HepG2 (cell line): ENCODE measurements at regions of chr17 and their contacts with region 1.

Region 1: GRCh38 chr17:32755045-32755805 is 121.7 kb downstream of the MYO1D start:
- DNase-seq: peak; percentile 69
- ATAC-seq: peak; percentile 59
- H3K4me3 ChIP-seq: no peak overlapping the region
- H3K27ac ChIP-seq: no peak overlapping the region
- H3K4me1 ChIP-seq: no peaks in the 10 kb centered on the region
- H3K27me3 ChIP-seq: no peaks in the 10 kb centered on the region
- CTCF ChIP-seq: peak; percentile 64
- EP300 ChIP-seq: no peak
- POLR2A ChIP-seq: no peak
- RAD21 ChIP-seq: peak; percentile 38; the same call in 1 of the 2 replicates

Region 2: DNA sequence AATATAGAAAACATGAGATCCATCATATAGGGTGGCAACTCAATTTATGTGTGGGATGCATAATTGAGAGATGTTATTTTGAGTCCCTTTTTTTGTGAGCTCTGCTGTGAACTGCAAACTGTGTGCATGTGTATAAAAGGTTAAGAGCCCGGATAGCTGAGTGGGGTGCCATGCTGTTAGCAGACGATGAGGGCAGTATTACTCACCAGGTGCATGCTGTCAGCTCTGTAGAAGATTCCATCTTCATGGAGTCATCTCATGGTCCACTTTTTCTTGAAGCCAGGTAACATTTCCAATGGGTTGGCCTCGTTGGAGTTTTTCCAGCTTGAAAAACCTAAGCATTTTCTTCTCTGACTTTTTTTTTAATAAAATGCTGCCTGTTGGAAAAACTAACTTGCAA is 532.6 kb before region 1 on chr17:
- CTCF ChIA-PET with region 1: no interaction called
- POLR2A ChIA-PET with region 1: no interaction called
- in situ Hi-C with region 1: no loop called
- intact Hi-C with region 1: no loop called
- DNase-seq: no peak
- ATAC-seq: no peak
- H3K4me3 ChIP-seq: no peak overlapping the region
- H3K27ac ChIP-seq: no peak overlapping the region
- H3K4me1 ChIP-seq: no peaks in the 10 kb centered on the region
- H3K27me3 ChIP-seq: no peaks in the 10 kb centered on the region
- CTCF ChIP-seq: no peak
- EP300 ChIP-seq: no peak
- POLR2A ChIP-seq: no peak
- RAD21 ChIP-seq: no peak

Region 3: GRCh38 chr17:32486111-32486700 is 269.0 kb before region 1 on chr17:
- CTCF ChIA-PET with region 1: no interaction called
- POLR2A ChIA-PET with region 1: no interaction called
- in situ Hi-C with region 1: loop called (anchors 10 kb)
- intact Hi-C with region 1: loop called (anchors 5 kb)
- DNase-seq: peak; percentile 49
- ATAC-seq: peak; percentile 78
- H3K4me3 ChIP-seq: peak overlapping the region; percentile 47 to 67 (median 64); a peak in 5 of 6 replicates
- H3K27ac ChIP-seq: peak overlapping the region; percentile 64
- H3K4me1 ChIP-seq: peaks cover 43% of the 10 kb centered on the region
- H3K27me3 ChIP-seq: no peaks in the 10 kb centered on the region
- CTCF ChIP-seq: no peak
- EP300 ChIP-seq: no peak
- POLR2A ChIP-seq: peak; percentile 28 to 38; a peak in 2 of 4 replicates
- RAD21 ChIP-seq: peak; percentile 6; the same call in 1 of the 2 replicates

Region 4: GRCh38 chr17:32659419-32659842 is 95.8 kb before region 1 on chr17:
- CTCF ChIA-PET with region 1: interaction called, 12 read pairs
- POLR2A ChIA-PET with region 1: no interaction called
- in situ Hi-C with region 1: no loop called
- intact Hi-C with region 1: loop called (anchors 1 kb)
- DNase-seq: peak; percentile 48
- ATAC-seq: peak; percentile 71
- H3K4me3 ChIP-seq: no peak overlapping the region
- H3K27ac ChIP-seq: no peak overlapping the region
- H3K4me1 ChIP-seq: peaks cover 4% of the 10 kb centered on the region
- H3K27me3 ChIP-seq: no peaks in the 10 kb centered on the region
- CTCF ChIP-seq: peak; percentile 80
- EP300 ChIP-seq: no peak
- POLR2A ChIP-seq: no peak
- RAD21 ChIP-seq: 0 out of 2 replicates have a peak, but pooled peaks have one; percentile 30

Region 5: GRCh38 chr17:32664936-32665583 is 90.2 kb before region 1 on chr17:
- CTCF ChIA-PET with region 1: interaction called, 12 read pairs
- POLR2A ChIA-PET with region 1: no interaction called
- in situ Hi-C with region 1: loop called (anchors 5 kb)
- intact Hi-C with region 1: no loop called
- DNase-seq: no peak
- ATAC-seq: no peak
- H3K4me3 ChIP-seq: no peak overlapping the region
- H3K27ac ChIP-seq: no peak overlapping the region
- H3K4me1 ChIP-seq: no peaks in the 10 kb centered on the region
- H3K27me3 ChIP-seq: no peaks in the 10 kb centered on the region
- CTCF ChIP-seq: no peak
- EP300 ChIP-seq: no peak
- POLR2A ChIP-seq: no peak
- RAD21 ChIP-seq: no peak

Region 6: DNA sequence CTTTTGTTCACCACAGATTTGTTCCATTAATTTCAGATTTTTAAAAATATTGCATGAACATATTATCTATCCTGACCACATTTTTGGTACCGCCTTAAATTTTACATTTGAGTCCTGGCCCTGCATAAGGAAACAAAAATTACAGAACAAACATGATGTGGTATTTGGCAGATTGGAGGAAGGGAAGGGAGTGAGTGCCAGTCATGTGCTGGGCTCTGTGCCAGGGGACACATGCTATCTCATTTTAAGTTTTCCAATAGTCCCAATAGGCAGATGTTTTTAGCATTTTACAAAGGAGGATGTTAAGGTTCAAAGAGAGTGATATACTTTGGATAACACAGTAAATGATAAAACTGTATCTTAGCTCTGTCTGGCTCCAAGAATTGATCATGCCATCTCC is 83.3 kb before region 1 on chr17:
- CTCF ChIA-PET with region 1: interaction called, 29 read pairs
- POLR2A ChIA-PET with region 1: no interaction called
- in situ Hi-C with region 1: loop called (anchors 5 kb)
- intact Hi-C with region 1: loop called (anchors 1 kb)
- DNase-seq: no peak
- ATAC-seq: no peak
- H3K4me3 ChIP-seq: no peak overlapping the region
- H3K27ac ChIP-seq: no peak overlapping the region
- H3K4me1 ChIP-seq: no peaks in the 10 kb centered on the region
- H3K27me3 ChIP-seq: no peaks in the 10 kb centered on the region
- CTCF ChIP-seq: no peak
- EP300 ChIP-seq: no peak
- POLR2A ChIP-seq: no peak
- RAD21 ChIP-seq: no peak

Region 7: GRCh38 chr17:32719689-32720088 is 35.5 kb before region 1 on chr17:
- CTCF ChIA-PET with region 1: no interaction called
- POLR2A ChIA-PET with region 1: no interaction called
- in situ Hi-C with region 1: no loop called
- intact Hi-C with region 1: no loop called
- DNase-seq: no peak
- ATAC-seq: no peak
- H3K4me3 ChIP-seq: no peak overlapping the region
- H3K27ac ChIP-seq: no peak overlapping the region
- H3K4me1 ChIP-seq: no peaks in the 10 kb centered on the region
- H3K27me3 ChIP-seq: no peaks in the 10 kb centered on the region
- CTCF ChIP-seq: no peak
- EP300 ChIP-seq: no peak
- POLR2A ChIP-seq: no peak
- RAD21 ChIP-seq: no peak